Heart right ventricle (tissue), 16 donors: ENCODE measurements at regions of chr3 and their contacts with region 1.

Region 1: GRCh38 chr3:171459942-171460724 is at the start of gene TNIK:
- DNase-seq: peak; percentile 92 to 93
- ATAC-seq: peak; percentile 95 to 98 (median 96)
- H3K4me3 ChIP-seq: peak within 1 kb of the TSS; percentile 40 to 89 (median 72)
- H3K27ac ChIP-seq: peak within 1 kb of the TSS; percentile 54 to 87 (median 82)
- H3K4me1 ChIP-seq: peaks cover 0 to 52% (median 25%) of the 10 kb centered on the region in 9 donors
- H3K27me3 ChIP-seq: peaks cover 0 to 30% (median 9%) of the 10 kb centered on the region in 7 donors
- CTCF ChIP-seq: peak in 1 of 9 donors; percentile 36
- total RNA-seq, gene TNIK: 20.5 to 51.9 (median 38.8) TPM

Region 2: DNA sequence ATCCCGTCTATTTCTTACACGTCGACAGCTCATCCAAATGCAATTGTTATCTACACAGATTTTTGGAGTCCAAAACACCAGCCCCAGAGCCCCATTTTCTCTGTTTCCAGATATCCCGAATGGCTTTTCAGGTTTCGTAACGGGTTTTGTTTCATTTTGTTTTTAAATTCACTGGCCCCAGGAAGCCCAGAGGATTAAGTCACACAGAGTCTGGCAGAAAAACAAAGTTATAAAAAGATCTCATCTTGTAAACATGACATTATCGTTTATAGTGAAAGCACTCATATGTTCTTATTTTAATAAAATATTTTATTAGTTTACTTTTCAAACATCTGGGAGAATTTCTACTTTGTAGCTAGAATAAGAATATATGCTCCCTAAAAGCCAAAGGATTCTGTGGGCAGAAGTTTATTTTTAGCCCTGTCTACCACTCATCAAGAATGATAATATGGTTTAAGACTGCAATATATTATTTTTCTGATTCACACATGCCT is 284.3 kb before region 1 on chr3:
- intact Hi-C with region 1: loop called in 1 of 10 experiments (anchors 5 kb)
- DNase-seq: no peak
- ATAC-seq: peak in 5 of 8 donors; percentile 14 to 34 (median 31)
- H3K4me3 ChIP-seq: peak overlapping the region in 8 of 10 donors; percentile 22 to 44 (median 30)
- H3K27ac ChIP-seq: peak overlapping the region; percentile 4 to 85 (median 60)
- H3K4me1 ChIP-seq: peaks cover 6 to 34% (median 24%) of the 10 kb centered on the region in 9 donors
- H3K27me3 ChIP-seq: no peaks in the 10 kb centered on the region
- CTCF ChIP-seq: no peak

Region 3: GRCh38 chr3:171306631-171307030 is 153.5 kb before region 1 on chr3:
- intact Hi-C with region 1: loop called in 1 of 10 experiments (anchors 10 kb)
- DNase-seq: peak; percentile 59 to 86
- ATAC-seq: peak; percentile 88 to 94 (median 92)
- H3K4me3 ChIP-seq: peak overlapping the region in 5 of 10 donors; percentile 9 to 23 (median 15)
- H3K27ac ChIP-seq: peak overlapping the region; percentile 47 to 90 (median 74)
- H3K4me1 ChIP-seq: peaks cover 0 to 39% (median 21%) of the 10 kb centered on the region in 9 donors
- H3K27me3 ChIP-seq: no peaks in the 10 kb centered on the region
- CTCF ChIP-seq: no peak

Region 4: DNA sequence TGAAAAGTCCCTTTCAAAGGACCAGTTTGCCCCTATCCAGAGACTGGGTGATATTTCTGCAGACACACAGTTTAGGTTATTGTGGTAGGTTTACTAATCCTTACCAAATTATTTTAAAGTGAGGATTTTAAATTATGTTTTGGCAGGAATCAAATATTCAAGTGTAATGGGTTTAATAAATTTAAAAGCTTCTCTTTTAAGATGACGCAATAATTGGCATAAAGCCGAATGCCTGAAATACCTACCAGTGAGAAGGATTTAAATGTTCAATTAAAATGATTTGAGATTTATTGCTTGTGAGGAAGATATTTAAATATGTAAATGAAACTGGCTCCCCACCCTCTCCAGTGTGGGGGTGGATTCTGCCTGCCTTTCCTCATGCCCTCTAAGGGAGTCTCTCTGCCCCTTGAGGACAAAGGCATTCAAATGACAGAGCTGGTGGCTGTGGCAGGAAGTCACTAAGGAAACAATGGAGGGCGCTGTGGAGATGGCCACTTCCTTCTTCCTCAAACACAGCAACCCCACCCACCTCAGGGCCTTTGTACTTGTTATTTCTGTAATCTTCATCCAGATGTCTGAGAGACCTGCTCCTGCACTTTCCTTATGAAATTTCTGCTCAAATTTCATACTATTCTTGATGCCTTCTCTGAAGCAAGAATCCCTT is 131.6 kb before region 1 on chr3:
- intact Hi-C with region 1: loop called in 7 of 10 experiments (anchors 5 to 10 kb)
- DNase-seq: no peak
- ATAC-seq: peak in 1 of 8 donors; percentile 41
- H3K4me3 ChIP-seq: no peak overlapping the region
- H3K27ac ChIP-seq: peak overlapping the region in 3 of 10 donors; percentile 6 to 59 (median 24)
- H3K4me1 ChIP-seq: peaks cover 5 to 69% (median 46%) of the 10 kb centered on the region in 9 donors
- H3K27me3 ChIP-seq: no peaks in the 10 kb centered on the region
- CTCF ChIP-seq: peak in 3 of 9 donors; percentile 7 to 42 (median 22)

Region 5: GRCh38 chr3:171548917-171549316 is 88.8 kb after region 1 on chr3:
- intact Hi-C with region 1: loop called in 3 of 10 experiments (anchors 10 kb)
- DNase-seq: no peak
- ATAC-seq: no peak
- H3K4me3 ChIP-seq: no peak overlapping the region
- H3K27ac ChIP-seq: no peak overlapping the region
- H3K4me1 ChIP-seq: peaks cover 0 to 19% (median 0%) of the 10 kb centered on the region in 9 donors
- H3K27me3 ChIP-seq: no peaks in the 10 kb centered on the region
- CTCF ChIP-seq: no peak

Region 6: DNA sequence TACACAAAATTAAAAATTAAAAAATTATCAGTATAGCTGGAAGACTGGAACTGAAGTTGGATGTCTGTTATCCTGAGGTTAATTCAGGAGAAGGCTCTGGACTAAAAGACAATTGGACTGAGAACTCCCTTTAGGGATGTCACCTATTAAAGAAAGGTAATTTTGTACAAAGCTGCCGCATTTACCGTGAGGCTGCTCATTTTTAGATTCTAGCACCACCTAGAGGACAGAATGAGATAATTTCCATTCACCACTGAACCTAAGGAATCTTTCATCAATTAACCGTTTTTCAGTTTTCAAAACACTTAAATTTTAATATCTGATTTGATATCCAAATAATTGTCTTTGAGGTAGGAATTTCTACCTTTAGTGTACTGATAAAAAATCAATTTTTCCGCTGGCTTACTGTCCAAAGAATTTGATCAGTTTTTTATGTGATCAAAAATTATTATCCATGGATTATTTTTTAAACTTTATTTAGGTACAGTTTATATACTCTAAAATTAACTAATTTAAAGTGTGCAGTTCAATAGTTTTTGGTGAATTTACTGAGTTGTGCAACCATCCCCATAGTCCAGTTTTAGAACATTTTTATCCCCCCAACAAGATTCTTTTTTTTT is 106.8 kb after region 1 on chr3:
- intact Hi-C with region 1: loop called in 1 of 10 experiments (anchors 10 kb)
- DNase-seq: no peak
- ATAC-seq: peak in 3 of 8 donors; percentile 25 to 46 (median 45)
- H3K4me3 ChIP-seq: no peak overlapping the region
- H3K27ac ChIP-seq: no peak overlapping the region
- H3K4me1 ChIP-seq: peaks cover 2 to 27% (median 11%) of the 10 kb centered on the region in 9 donors
- H3K27me3 ChIP-seq: no peaks in the 10 kb centered on the region
- CTCF ChIP-seq: peak; percentile 64 to 86 (median 82)

Region 7: DNA sequence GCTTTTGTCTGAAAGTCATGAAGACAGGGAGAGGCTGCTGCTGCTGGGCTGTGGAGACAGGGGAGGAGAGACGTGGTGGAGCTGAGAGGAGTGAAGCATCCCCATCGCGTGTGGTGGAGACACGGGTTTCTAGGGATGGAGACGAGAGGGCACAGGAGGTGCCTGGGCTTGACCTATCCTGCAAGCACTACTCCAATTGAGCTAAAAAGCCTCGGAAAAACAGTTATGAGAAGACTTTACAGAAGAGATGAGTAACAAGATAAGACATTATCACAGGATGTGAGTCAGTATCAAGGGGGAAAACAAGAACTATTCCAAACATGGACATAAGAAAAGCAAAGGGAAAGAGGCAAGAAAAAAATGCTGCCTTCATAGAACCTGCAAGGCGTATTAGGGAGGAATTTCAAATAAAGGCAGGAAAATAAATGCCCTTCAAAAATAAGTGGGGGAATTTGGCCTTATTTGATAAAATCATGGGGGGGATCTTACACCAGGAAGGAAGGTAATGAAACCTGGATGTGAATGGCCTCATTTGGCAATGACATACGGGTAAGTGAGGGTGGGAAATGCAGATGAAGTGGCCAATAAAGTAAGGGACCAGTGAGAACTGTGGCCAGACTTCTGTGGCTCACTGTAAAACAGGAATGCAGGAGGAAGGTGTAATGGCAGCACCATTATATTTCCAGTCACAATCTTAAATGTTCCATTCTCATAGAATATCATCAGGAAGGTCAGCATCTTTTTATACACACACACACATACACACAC is 252.2 kb after region 1 on chr3:
- intact Hi-C with region 1: no loop called
- DNase-seq: no peak
- ATAC-seq: peak in 1 of 8 donors; percentile 55
- H3K4me3 ChIP-seq: no peak overlapping the region
- H3K27ac ChIP-seq: peak overlapping the region in 2 of 10 donors; percentile 24 to 33
- H3K4me1 ChIP-seq: peaks cover 0 to 8% (median 0%) of the 10 kb centered on the region in 9 donors
- H3K27me3 ChIP-seq: no peaks in the 10 kb centered on the region
- CTCF ChIP-seq: no peak

Region 8: GRCh38 chr3:171772427-171773056 is 312.4 kb after region 1 on chr3:
- intact Hi-C with region 1: no loop called
- DNase-seq: peak; percentile 22 to 68
- ATAC-seq: peak in 4 of 8 donors; percentile 27 to 54 (median 44)
- H3K4me3 ChIP-seq: no peak overlapping the region
- H3K27ac ChIP-seq: peak overlapping the region in 2 of 10 donors; percentile 80 to 83
- H3K4me1 ChIP-seq: peaks cover 0 to 50% (median 23%) of the 10 kb centered on the region in 9 donors
- H3K27me3 ChIP-seq: no peaks in the 10 kb centered on the region
- CTCF ChIP-seq: peak; percentile 28 to 79 (median 73)